Activated T-helper 2 cell treated with anti-CD3 and anti-CD28 coated beads, Interferon-gamma antibody, Interleukin-2, Interleukin-4, amounts not matched to agents 10 μg/mL and 5 μg/mL and 100 μg/mL, durations not matched to agents 14 hours and 24 hours and 36 hours (primary cell): ENCODE measurements at regions of chr10 and their contacts with region 1.

Region 1: DNA sequence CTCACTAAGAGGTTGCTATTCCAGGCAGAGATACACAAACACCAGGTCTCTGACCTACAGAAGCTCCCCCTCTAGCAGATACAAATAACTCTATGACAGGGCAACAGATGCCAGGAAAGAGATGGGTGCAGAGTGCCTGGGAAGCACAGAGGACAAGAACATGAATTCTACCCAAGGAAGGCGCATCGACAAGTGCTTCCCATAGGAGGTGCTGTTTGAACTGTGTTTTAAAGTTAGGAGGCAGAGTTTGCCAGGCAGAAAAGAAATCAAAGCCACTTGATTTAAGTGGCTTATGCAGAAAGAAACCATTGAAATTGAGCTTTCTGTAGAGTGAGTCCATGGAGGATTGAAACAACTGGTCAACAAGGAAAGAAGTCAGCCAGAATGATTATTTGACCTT is 35.3 kb upstream of the EGR2 start:
- DNase-seq: no peak
- H3K4me3 Mint-ChIP-seq: no peak overlapping the region
- H3K27ac Mint-ChIP-seq: peak overlapping the region; percentile 28
- H3K4me1 Mint-ChIP-seq: peaks cover 59% of the 10 kb centered on the region
- H3K27me3 Mint-ChIP-seq: no peaks in the 10 kb centered on the region

Region 2: DNA sequence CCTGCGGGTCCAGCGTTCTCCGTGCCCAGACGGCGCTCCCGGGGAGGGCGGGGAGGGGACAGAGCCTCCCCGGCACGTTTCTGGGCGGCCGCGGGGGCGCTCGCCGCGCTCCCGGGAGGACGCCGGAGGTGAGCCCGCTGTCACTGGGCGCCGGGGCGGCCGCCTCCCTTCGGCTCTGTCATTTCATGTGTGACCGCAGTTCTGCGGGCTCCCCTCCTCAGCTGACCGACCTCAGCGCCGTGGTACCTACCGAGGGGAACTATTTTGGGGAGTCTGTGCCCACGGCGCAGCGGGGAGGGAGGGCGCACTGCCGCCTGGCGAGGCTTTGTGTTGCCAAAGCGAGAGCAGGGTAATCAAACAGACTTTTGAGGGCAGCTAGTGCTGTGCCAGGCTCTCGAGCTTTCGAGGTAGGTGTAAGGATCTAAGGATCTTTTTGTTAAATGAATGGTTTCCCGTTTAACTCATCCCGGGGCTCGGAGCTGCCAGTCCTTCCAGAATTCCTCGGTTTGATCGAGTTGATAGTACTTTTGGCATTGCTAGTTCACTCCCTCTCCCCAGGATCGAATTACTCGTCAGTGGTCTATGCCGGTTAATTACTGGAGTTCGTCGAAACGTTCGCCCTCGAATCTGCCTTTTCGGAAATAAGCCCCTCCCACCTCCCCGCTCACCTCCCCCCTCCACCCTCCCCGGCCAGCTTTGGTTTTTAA is 948.1 kb before region 1 on chr10:
- intact Hi-C with region 1: loop called (anchors 10 kb)
- DNase-seq: peak; percentile 68
- H3K4me3 Mint-ChIP-seq: peak overlapping the region; percentile 95
- H3K27ac Mint-ChIP-seq: peak overlapping the region; percentile 93
- H3K4me1 Mint-ChIP-seq: peaks cover 40% of the 10 kb centered on the region
- H3K27me3 Mint-ChIP-seq: no peaks in the 10 kb centered on the region

Region 3: GRCh38 chr10:62637249-62638061 is 214.0 kb before region 1 on chr10:
- intact Hi-C with region 1: loop called (anchors 1 kb)
- DNase-seq: peak; percentile 75
- H3K4me3 Mint-ChIP-seq: no peak overlapping the region
- H3K27ac Mint-ChIP-seq: no peak overlapping the region
- H3K4me1 Mint-ChIP-seq: peaks cover 37% of the 10 kb centered on the region
- H3K27me3 Mint-ChIP-seq: no peaks in the 10 kb centered on the region

Region 4: GRCh38 chr10:62779487-62780248 is 71.8 kb before region 1 on chr10:
- intact Hi-C with region 1: loop called (anchors 2 kb)
- DNase-seq: peak; percentile 31
- H3K4me3 Mint-ChIP-seq: no peak overlapping the region
- H3K27ac Mint-ChIP-seq: peak overlapping the region; percentile 51
- H3K4me1 Mint-ChIP-seq: peaks cover 36% of the 10 kb centered on the region
- H3K27me3 Mint-ChIP-seq: peaks cover 9% of the 10 kb centered on the region

Region 5: DNA sequence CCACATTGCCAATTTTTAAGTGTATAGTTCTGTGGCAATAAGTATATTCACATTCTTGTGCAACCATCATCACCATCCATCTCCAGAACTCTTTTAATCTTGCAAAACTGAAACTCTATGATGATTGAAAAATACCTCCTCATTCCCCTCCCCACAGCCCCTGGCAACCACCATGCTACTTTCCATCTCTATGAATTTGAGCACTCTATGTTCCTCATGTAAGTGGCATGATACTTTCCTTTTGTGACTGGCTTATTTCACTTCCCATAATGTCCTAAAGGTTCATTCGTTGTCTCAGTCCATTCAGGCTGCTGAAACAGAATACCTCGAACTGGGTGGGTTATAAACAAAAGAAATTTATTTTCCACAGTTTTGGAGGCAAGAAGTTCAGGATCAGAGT is 11.9 kb before region 1 on chr10:
- intact Hi-C with region 1: no loop called
- DNase-seq: no peak
- H3K4me3 Mint-ChIP-seq: no peak overlapping the region
- H3K27ac Mint-ChIP-seq: no peak overlapping the region
- H3K4me1 Mint-ChIP-seq: peaks cover 18% of the 10 kb centered on the region
- H3K27me3 Mint-ChIP-seq: peaks cover 21% of the 10 kb centered on the region

Region 6: DNA sequence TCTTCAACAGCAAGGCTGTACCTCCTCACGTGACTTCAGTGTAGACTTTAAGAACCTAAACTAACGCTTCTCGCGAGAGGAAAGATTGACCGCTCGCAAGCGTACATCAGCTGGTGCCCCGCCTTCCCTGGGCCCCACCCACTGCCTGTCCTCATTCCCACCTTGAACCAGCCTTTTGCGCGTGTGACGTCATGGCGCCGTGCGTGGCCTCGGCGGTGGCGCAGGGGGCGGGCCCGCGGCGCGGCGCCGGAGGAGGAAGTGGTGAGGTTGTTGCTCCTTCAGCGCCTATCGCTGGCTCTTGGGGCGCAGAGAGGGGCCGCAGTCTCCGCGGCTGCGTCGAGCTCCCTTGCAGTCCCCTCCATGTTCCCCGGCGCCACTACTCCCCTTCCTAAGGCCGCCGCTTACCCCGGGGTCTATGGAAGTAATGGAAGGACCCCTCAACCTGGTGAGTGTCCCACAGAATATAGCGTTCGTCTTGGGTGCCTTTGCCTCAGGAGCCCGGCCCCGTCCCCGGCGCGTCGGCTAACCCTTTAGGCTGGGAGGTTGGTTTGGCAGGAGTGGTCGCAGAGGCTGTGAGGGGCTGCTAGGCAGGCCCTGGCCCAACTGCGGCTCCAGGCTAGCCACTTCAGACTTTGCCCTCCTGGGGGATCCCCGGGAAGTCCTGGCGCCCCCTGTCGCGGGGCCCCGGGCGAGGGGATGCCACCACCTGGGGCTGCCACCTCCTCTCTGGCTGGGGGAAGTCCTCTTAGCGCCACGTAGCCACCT is 281.8 kb after region 1 on chr10 and contains the start of gene NRBF2:
- intact Hi-C with region 1: loop called (anchors 2 kb)
- DNase-seq: peak; percentile 96
- H3K4me3 Mint-ChIP-seq: peak within 1 kb of the TSS; percentile 94
- H3K27ac Mint-ChIP-seq: peak within 1 kb of the TSS; percentile 95
- H3K4me1 Mint-ChIP-seq: peaks cover 19% of the 10 kb centered on the region
- H3K27me3 Mint-ChIP-seq: peaks cover 3% of the 10 kb centered on the region
- total RNA-seq, gene NRBF2: 32.2 and 32.7 TPM in 2 replicates

Region 7: DNA sequence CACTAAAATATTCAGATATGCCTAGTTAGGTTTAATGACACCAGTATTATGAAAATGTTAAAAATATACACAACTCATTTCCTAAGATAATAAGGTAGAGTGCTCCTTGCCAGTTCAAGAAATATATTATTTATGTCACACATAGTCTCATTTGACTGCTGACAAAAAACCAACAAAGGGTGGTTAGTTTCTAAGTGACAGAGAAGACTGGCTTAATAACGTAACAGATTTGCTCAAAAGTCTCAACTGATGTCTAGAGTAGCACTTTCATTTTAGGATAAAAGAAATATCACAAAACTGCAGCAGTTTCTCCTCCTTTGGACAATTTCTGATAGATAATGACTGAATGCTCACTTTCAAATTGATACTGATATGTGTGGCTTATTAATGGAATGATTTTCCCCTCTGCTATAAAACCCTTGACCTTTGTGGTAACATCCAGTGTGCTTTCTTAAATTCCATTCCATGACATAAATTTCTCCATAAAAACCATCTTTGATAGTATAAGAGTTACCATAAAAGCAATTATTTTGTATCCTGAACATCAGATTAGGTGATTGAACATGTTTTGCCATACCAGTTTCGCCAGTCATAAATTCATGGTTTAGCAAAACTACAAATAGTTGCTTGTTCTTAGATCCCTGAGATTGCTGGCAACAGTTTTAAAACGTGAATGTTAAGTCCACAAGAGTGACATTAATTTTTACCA is 375.9 kb after region 1 on chr10:
- intact Hi-C with region 1: loop called (anchors 5 kb)
- DNase-seq: no peak
- H3K4me3 Mint-ChIP-seq: peak overlapping the region; percentile 41
- H3K27ac Mint-ChIP-seq: peak overlapping the region; percentile 74
- H3K4me1 Mint-ChIP-seq: peaks cover 34% of the 10 kb centered on the region
- H3K27me3 Mint-ChIP-seq: no peaks in the 10 kb centered on the region